Activated T-helper 1 cell treated with anti-CD3 and anti-CD28 coated beads, Interleukin-12 subunit alpha, Interleukin-12 subunit beta, Interleukin-2, Interleukin-4 antibody, amounts not matched to agents 30 ng/mL and 10 ng/mL and 1 ng/mL, durations not matched to agents 14 hours and 24 hours and 36 hours (primary cell): ENCODE measurements at regions of chr4 and their contacts with region 1.

Region 1: GRCh38 chr4:15778289-15779241 is at the start of gene CD38:
- DNase-seq: peak; percentile 64
- H3K4me3 Mint-ChIP-seq: peak within 1 kb of the TSS; percentile 93
- H3K27ac Mint-ChIP-seq: peak within 1 kb of the TSS; percentile 92
- H3K4me1 Mint-ChIP-seq: peaks cover 86% of the 10 kb centered on the region
- H3K27me3 Mint-ChIP-seq: no peaks in the 10 kb centered on the region
- total RNA-seq, gene CD38: 148 and 152 TPM in 2 replicates

Region 2: GRCh38 chr4:15428611-15429010 is 350.0 kb before region 1 on chr4:
- intact Hi-C with region 1: no loop called
- DNase-seq: no peak
- H3K4me3 Mint-ChIP-seq: no peak overlapping the region
- H3K27ac Mint-ChIP-seq: no peak overlapping the region
- H3K4me1 Mint-ChIP-seq: peaks cover 26% of the 10 kb centered on the region
- H3K27me3 Mint-ChIP-seq: no peaks in the 10 kb centered on the region

Region 3: GRCh38 chr4:15469402-15470127 is 309.0 kb before region 1 on chr4 and contains the start of gene CC2D2A:
- intact Hi-C with region 1: no loop called
- DNase-seq: no peak
- H3K4me3 Mint-ChIP-seq: no peak within 1 kb of the TSS
- H3K27ac Mint-ChIP-seq: no peak within 1 kb of the TSS
- H3K4me1 Mint-ChIP-seq: peaks cover 5% of the 10 kb centered on the region
- H3K27me3 Mint-ChIP-seq: peaks cover 6% of the 10 kb centered on the region
- total RNA-seq, gene CC2D2A: not detected in 2 replicates

Region 4: DNA sequence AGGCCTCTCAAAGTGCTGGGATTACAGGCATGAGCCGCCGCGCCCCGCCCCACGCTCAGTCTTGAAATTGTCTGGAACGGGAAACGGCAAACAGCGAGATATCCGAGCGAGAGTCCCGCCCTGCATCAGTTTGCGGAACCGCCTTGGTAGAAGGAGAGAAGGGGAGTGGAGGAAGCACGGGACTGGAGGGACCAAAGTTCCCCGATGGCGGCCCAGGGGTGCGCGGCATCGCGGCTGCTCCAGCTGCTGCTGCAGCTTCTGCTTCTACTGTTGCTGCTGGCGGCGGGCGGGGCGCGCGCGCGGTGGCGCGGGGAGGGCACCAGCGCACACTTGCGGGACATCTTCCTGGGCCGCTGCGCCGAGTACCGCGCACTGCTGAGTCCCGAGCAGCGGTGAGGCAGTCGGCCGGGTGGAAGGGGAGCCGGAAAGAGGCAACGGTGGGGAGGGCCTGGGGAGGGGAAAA is 75.6 kb before region 1 on chr4 and contains the start of gene BST1:
- intact Hi-C with region 1: loop called (anchors 2 kb)
- DNase-seq: peak; percentile 41
- H3K4me3 Mint-ChIP-seq: peak within 1 kb of the TSS; percentile 87
- H3K27ac Mint-ChIP-seq: no peak within 1 kb of the TSS
- H3K4me1 Mint-ChIP-seq: no peaks in the 10 kb centered on the region
- H3K27me3 Mint-ChIP-seq: peaks cover 25% of the 10 kb centered on the region
- total RNA-seq, gene BST1: 0.81 and 0.93 TPM in 2 replicates

Region 5: GRCh38 chr4:15738877-15739276 is 39.7 kb before region 1 on chr4:
- intact Hi-C with region 1: loop called (anchors 1 kb)
- DNase-seq: no peak
- H3K4me3 Mint-ChIP-seq: peak overlapping the region; percentile 35
- H3K27ac Mint-ChIP-seq: peak overlapping the region; percentile 85
- H3K4me1 Mint-ChIP-seq: peaks cover 51% of the 10 kb centered on the region
- H3K27me3 Mint-ChIP-seq: no peaks in the 10 kb centered on the region

Region 6: GRCh38 chr4:15765910-15766697 is 12.5 kb before region 1 on chr4:
- intact Hi-C with region 1: loop called (anchors 1 kb)
- DNase-seq: peak; percentile 54
- H3K4me3 Mint-ChIP-seq: peak overlapping the region; percentile 43
- H3K27ac Mint-ChIP-seq: peak overlapping the region; percentile 87
- H3K4me1 Mint-ChIP-seq: peaks cover 73% of the 10 kb centered on the region
- H3K27me3 Mint-ChIP-seq: no peaks in the 10 kb centered on the region

Region 7: DNA sequence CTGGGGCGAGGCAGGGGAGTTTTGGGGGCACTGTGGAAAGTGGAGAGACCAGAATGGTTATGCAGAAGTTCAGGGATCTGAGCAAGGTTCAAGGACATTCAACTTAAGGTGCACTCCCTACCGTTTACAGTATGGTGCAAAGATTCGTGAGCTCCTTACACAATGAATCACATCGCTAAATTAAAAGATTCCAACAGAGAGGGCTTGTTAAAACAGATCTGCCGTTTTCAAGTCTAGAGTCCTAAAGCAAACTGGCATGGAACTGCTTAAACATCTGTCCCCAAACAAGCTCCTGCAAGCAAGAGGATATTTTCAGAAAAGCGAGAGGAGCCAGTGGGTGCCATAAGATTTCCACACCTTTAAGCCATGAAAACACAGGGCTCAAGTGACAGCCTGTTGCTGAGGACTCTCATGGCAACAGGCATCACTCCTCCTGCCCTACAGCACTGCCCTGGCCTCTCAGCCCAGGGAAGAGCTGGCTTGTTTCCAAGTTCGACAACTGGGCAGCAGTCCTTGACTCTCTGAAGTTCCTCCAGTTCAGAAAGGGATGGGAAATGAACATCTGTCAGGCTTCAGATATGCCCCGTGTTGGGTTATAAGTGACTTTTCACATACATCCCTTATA is 1992.8 kb after region 1 on chr4:
- intact Hi-C with region 1: no loop called
- DNase-seq: no peak
- H3K4me3 Mint-ChIP-seq: no peak overlapping the region
- H3K27ac Mint-ChIP-seq: no peak overlapping the region
- H3K4me1 Mint-ChIP-seq: no peaks in the 10 kb centered on the region
- H3K27me3 Mint-ChIP-seq: peaks cover 4% of the 10 kb centered on the region